HepG2 (cell line): ENCODE measurements at regions of chr13 and their contacts with region 1.

Region 1: GRCh38 chr13:53250266-53250875 is 221.8 kb downstream of the OLFM4 start:
- DNase-seq: peak; percentile 74
- ATAC-seq: peak; percentile 93
- H3K4me3 ChIP-seq: no peak overlapping the region
- H3K27ac ChIP-seq: no peak overlapping the region
- H3K4me1 ChIP-seq: no peaks in the 10 kb centered on the region
- H3K27me3 ChIP-seq: no peaks in the 10 kb centered on the region
- CTCF ChIP-seq: peak; percentile 72
- EP300 ChIP-seq: no peak
- POLR2A ChIP-seq: no peak
- RAD21 ChIP-seq: peak; percentile 43; the same call in 1 of the 2 replicates

Region 2: DNA sequence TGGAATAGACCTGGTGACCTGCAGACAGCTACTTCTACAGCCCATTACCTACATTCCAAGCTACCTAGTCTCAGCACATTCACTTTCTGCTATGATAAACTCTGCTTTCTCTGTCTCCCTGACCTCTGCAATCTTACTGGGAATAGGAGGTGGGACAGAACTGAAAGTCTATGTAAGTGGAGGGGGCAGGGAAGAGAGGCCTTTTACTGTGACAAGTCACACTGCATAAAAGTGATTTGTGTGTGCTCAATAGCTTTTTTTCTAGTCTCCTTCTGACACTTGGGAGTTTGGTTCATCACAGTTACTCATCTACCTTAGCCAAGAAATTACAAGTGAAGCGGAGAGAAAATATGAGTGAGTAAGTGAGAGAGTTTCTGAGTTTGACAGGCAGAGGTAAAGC is 100.7 kb after region 1 on chr13:
- CTCF ChIA-PET with region 1: no interaction called
- POLR2A ChIA-PET with region 1: no interaction called
- in situ Hi-C with region 1: no loop called
- intact Hi-C with region 1: no loop called
- DNase-seq: no peak
- ATAC-seq: no peak
- H3K4me3 ChIP-seq: no peak overlapping the region
- H3K27ac ChIP-seq: no peak overlapping the region
- H3K4me1 ChIP-seq: no peaks in the 10 kb centered on the region
- H3K27me3 ChIP-seq: no peaks in the 10 kb centered on the region
- CTCF ChIP-seq: no peak
- EP300 ChIP-seq: no peak
- POLR2A ChIP-seq: no peak
- RAD21 ChIP-seq: no peak

Region 3: DNA sequence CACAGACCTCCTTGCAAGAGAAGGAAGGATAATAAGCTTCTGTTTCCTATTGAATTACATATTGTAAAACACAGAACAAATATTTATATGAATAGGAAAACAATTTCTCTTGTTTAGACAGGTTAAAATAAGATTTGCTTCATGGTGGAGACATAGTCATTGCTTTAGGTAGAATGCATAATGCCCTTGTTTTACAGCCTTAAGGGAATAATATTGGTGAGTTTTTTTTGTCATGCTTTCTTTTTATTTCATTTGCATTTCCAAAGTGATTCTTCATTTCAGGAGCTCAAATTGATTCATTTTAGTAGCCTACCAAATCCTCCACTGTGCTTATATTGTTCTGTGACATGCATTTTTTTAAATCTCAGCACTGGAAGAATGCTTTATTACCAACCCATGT is 468.9 kb after region 1 on chr13:
- CTCF ChIA-PET with region 1: no interaction called
- POLR2A ChIA-PET with region 1: no interaction called
- in situ Hi-C with region 1: no loop called
- intact Hi-C with region 1: no loop called
- DNase-seq: no peak
- ATAC-seq: no peak
- H3K4me3 ChIP-seq: no peak overlapping the region
- H3K27ac ChIP-seq: no peak overlapping the region
- H3K4me1 ChIP-seq: no peaks in the 10 kb centered on the region
- H3K27me3 ChIP-seq: no peaks in the 10 kb centered on the region; a peak in 1 of 5 replicates
- CTCF ChIP-seq: no peak
- EP300 ChIP-seq: no peak
- POLR2A ChIP-seq: no peak
- RAD21 ChIP-seq: no peak

Region 4: DNA sequence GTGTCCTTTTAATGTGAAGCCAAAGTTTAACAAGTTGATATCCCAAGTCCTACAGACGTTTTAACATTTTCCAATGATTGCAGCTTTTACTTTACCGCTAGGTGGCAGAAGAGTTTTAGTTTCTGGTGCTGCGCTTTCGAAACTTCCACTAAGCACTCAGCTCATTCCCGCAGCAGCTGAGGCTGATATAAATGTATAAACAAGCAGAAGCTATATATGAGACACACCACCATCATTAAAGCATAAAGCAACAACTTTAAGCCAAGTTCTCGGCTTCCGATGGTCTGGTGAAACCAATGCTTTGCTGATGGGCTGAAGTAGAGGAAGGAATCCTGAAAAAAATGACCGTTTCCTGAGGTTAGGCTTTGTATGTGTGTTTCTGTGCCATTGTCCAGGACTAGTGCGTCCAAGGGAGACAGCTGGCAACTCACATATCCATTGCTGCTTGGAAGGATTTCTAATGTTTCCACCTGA is 532.2 kb after region 1 on chr13:
- CTCF ChIA-PET with region 1: no interaction called
- POLR2A ChIA-PET with region 1: no interaction called
- in situ Hi-C with region 1: no loop called
- intact Hi-C with region 1: loop called (anchors 1 kb)
- DNase-seq: peak; percentile 33
- ATAC-seq: peak; percentile 84
- H3K4me3 ChIP-seq: no peak overlapping the region
- H3K27ac ChIP-seq: no peak overlapping the region
- H3K4me1 ChIP-seq: no peaks in the 10 kb centered on the region
- H3K27me3 ChIP-seq: no peaks in the 10 kb centered on the region
- CTCF ChIP-seq: peak; percentile 77
- EP300 ChIP-seq: no peak
- POLR2A ChIP-seq: no peak
- RAD21 ChIP-seq: 0 out of 2 replicates have a peak, but pooled peaks have one; percentile 29